ENCODE measurements at regions of chr6 and their contacts with region 1.

Region 1: DNA sequence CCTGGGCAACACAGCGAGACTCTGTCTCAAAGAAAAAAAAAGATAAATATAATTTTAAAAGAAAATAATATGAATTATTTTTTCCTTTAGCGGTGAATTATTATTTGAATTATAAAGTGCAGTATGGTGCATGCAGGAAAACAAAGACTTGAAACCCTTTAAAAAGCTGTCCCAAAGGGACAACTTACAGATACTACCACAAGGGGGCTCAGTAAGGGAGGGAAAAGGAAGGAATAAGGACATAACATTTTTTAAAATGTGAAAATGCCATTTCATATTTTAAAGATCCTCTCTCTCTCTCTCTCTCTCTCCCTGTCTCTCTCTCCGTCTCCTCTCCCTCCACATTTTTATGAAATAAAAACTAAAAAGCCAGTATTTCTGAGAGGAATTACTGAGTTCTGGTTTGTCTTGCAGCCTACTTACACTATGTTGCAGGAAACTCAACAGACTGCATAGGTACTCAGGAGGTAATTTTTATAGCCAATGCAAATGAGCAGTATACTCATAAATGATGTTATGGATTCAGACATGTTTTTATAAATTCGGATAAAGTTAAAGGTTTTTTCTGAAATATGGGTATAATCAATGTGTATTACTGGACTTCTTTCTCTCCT is 455.0 kb upstream of the GJE1 start:
- DNase-seq: peak; percentile 63
- ATAC-seq: 0 out of 2 replicates have a peak, but pooled peaks have one; percentile 33
- H3K4me3 ChIP-seq: no peak overlapping the region
- H3K27ac ChIP-seq: no peak overlapping the region
- H3K4me1 ChIP-seq: no peaks in the 10 kb centered on the region
- H3K27me3 ChIP-seq: no peaks in the 10 kb centered on the region
- CTCF ChIP-seq: peak; percentile 66

Region 2: GRCh38 chr6:141229296-141229695 is 448.4 kb before region 1 on chr6:
- CTCF ChIA-PET with region 1: no interaction called
- POLR2A ChIA-PET with region 1: no interaction called
- intact Hi-C with region 1: no loop called
- DNase-seq: no peak
- ATAC-seq: no peak
- H3K4me3 ChIP-seq: no peak overlapping the region
- H3K27ac ChIP-seq: no peak overlapping the region
- H3K4me1 ChIP-seq: no peaks in the 10 kb centered on the region
- H3K27me3 ChIP-seq: no peaks in the 10 kb centered on the region
- CTCF ChIP-seq: no peak

Region 3: DNA sequence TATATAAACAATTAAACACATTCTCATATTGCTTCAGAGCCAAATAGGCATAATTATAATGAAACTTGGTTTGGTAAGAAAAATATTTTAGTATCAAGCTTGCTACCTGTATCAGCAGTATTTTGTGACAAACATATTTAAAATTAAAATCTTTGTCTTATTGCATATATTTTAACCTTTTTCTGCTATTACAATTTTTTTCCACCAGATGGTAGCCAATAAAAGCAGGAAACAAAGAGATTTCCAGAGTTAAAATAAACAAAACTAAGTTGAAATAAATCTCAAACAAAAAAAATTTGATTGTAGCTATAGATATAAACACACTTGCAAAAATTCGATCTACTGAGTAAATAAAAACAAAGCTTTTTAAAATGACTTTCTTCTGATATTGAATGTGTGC is 36.3 kb before region 1 on chr6:
- CTCF ChIA-PET with region 1: no interaction called
- POLR2A ChIA-PET with region 1: interaction called, 3 read pairs
- intact Hi-C with region 1: loop called (anchors 1 kb)
- DNase-seq: peak; percentile 5
- ATAC-seq: no peak
- H3K4me3 ChIP-seq: no peak overlapping the region
- H3K27ac ChIP-seq: no peak overlapping the region
- H3K4me1 ChIP-seq: no peaks in the 10 kb centered on the region
- H3K27me3 ChIP-seq: no peaks in the 10 kb centered on the region
- CTCF ChIP-seq: peak; percentile 39; the same call in 1 of the 2 replicates

Region 4: DNA sequence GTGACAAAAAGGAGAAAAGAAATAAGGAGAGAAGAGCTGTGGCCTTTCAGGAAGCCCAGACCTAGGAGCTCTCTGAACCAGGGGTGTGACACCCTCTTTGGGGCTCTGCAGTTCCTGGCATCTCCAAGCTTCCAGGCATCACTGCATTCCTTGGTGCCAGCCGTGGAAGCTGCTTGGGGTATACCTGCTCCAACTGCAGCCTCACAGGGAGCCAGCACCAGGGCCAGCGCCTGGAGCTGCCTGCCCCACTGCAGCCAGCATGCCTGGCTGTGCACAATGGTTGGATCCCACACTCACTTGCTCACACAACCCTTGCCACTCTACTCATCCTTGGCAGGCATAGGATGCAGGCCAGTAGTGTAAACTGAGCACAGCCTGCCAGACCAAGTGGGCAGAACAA is 213.0 kb after region 1 on chr6:
- CTCF ChIA-PET with region 1: no interaction called
- POLR2A ChIA-PET with region 1: no interaction called
- intact Hi-C with region 1: no loop called
- DNase-seq: no peak
- ATAC-seq: no peak
- H3K4me3 ChIP-seq: no peak overlapping the region
- H3K27ac ChIP-seq: no peak overlapping the region
- H3K4me1 ChIP-seq: no peaks in the 10 kb centered on the region
- H3K27me3 ChIP-seq: no peaks in the 10 kb centered on the region
- CTCF ChIP-seq: no peak

Region 5: GRCh38 chr6:141980118-141980573 is 302.4 kb after region 1 on chr6:
- CTCF ChIA-PET with region 1: no interaction called
- POLR2A ChIA-PET with region 1: no interaction called
- intact Hi-C with region 1: loop called (anchors 5 kb)
- DNase-seq: peak; percentile 25
- ATAC-seq: peak; percentile 63
- H3K4me3 ChIP-seq: no peak overlapping the region
- H3K27ac ChIP-seq: no peak overlapping the region
- H3K4me1 ChIP-seq: peaks cover 9% of the 10 kb centered on the region
- H3K27me3 ChIP-seq: no peaks in the 10 kb centered on the region
- CTCF ChIP-seq: no peak

Region 6: GRCh38 chr6:142045380-142046278 is 367.9 kb after region 1 on chr6:
- CTCF ChIA-PET with region 1: no interaction called
- POLR2A ChIA-PET with region 1: no interaction called
- intact Hi-C with region 1: loop called (anchors 5 kb)
- DNase-seq: peak; percentile 50
- ATAC-seq: no peak
- H3K4me3 ChIP-seq: no peak overlapping the region
- H3K27ac ChIP-seq: no peak overlapping the region
- H3K4me1 ChIP-seq: no peaks in the 10 kb centered on the region
- H3K27me3 ChIP-seq: no peaks in the 10 kb centered on the region
- CTCF ChIP-seq: peak; percentile 61; the same call in 1 of the 2 replicates

Region 7: DNA sequence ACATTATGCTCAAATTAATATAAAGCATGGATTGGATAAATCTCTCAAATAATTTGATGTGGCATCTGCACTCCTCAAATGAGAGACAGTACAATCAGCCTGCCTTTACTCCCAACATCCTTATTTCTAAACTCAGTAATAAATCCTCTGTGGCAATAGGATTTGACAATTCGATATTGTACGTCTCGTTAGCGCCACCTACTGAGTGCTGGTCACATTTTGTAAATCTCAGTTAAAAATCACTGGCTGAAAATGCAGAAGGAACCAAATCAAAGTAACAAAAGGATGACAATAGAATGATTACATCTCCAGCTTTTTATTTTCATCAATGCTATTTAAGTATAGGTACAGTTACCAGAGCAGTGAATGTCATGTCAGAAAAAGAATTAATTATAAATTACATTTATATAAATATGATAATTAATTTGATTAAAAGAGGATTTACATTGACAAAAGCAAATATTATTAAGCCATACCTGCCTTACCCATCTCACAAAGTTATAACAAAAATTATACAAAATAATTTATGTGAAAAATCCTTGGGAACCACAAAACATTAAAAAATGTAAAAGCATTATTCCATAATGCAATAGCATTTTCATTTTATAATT is 434.9 kb after region 1 on chr6:
- CTCF ChIA-PET with region 1: no interaction called
- POLR2A ChIA-PET with region 1: no interaction called
- intact Hi-C with region 1: loop called (anchors 1 kb)
- DNase-seq: peak; percentile 84
- ATAC-seq: no peak
- H3K4me3 ChIP-seq: no peak overlapping the region
- H3K27ac ChIP-seq: no peak overlapping the region
- H3K4me1 ChIP-seq: no peaks in the 10 kb centered on the region
- H3K27me3 ChIP-seq: no peaks in the 10 kb centered on the region
- CTCF ChIP-seq: peak; percentile 78